K562 (cell line): ENCODE measurements at regions of chr3 and their contacts with region 1.

Region 1: GRCh38 chr3:150408221-150409102 is at the start of gene TSC22D2:
- DNase-seq: peak; percentile 90 to 97 (median 92)
- ATAC-seq: peak; percentile 74
- H3K4me3 ChIP-seq: peak within 1 kb of the TSS; percentile 81
- H3K27ac ChIP-seq: peak within 1 kb of the TSS; percentile 97
- H3K4me1 ChIP-seq: peaks cover 0 to 25% of the 10 kb centered on the region in 2 experiments; a peak in 2 of 5 replicates
- H3K27me3 ChIP-seq: no peaks in the 10 kb centered on the region
- CTCF ChIP-seq: peak in 1 of 3 experiments; percentile 20; a peak in 2 of 6 replicates
- EP300 ChIP-seq: no peak
- POLR2A ChIP-seq: peak; percentile 96
- RAD21 ChIP-seq: peak in 1 of 2 experiments; percentile 35
- polyA plus RNA-seq, gene TSC22D2: 21.7 to 44.0 TPM

Region 2: GRCh38 chr3:149662240-149662887 is 746.1 kb before region 1 on chr3:
- CTCF ChIA-PET with region 1: no interaction called
- POLR2A ChIA-PET with region 1: no interaction called
- in situ Hi-C with region 1: no loop called
- intact Hi-C with region 1: no loop called
- DNase-seq: no peak
- ATAC-seq: no peak
- H3K4me3 ChIP-seq: no peak overlapping the region
- H3K27ac ChIP-seq: no peak overlapping the region
- H3K4me1 ChIP-seq: peaks cover 2 to 5% of the 10 kb centered on the region in 2 experiments; a peak in 3 of 5 replicates
- H3K27me3 ChIP-seq: peaks cover 0 to 12% of the 10 kb centered on the region in 2 experiments; a peak in 2 of 5 replicates
- CTCF ChIP-seq: no peak
- EP300 ChIP-seq: no peak
- POLR2A ChIP-seq: no peak
- RAD21 ChIP-seq: no peak

Region 3: DNA sequence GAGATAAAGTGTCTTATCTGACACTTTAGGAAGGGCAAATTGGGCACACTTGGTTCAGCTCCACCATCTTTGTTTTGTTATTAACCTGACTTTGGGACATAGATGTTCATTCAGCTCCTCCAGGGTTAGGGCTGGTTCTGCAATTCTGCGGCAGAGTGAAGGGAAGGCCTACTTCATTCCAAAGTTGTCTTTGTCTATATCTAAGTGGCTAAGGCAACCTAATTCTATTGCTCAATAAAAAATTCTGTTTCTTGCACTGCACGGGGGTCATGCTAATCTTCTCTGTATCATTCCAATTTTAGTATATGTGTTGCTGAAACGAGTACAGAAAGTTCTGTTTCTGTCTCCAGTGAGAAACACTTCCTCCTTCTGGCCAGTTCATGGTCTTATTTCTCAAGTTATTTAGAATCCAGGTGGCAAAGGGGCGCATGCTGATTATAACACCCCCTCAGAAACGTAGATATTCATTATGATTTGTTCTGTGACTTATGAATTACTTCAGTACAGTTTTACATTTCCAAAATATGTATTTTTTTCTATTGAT is 491.3 kb before region 1 on chr3:
- CTCF ChIA-PET with region 1: no interaction called
- POLR2A ChIA-PET with region 1: no interaction called
- in situ Hi-C with region 1: no loop called
- intact Hi-C with region 1: no loop called
- DNase-seq: no peak
- ATAC-seq: no peak
- H3K4me3 ChIP-seq: no peak overlapping the region
- H3K27ac ChIP-seq: no peak overlapping the region
- H3K4me1 ChIP-seq: no peaks in the 10 kb centered on the region
- H3K27me3 ChIP-seq: no peaks in the 10 kb centered on the region
- CTCF ChIP-seq: no peak
- EP300 ChIP-seq: no peak
- POLR2A ChIP-seq: no peak
- RAD21 ChIP-seq: no peak

Region 4: DNA sequence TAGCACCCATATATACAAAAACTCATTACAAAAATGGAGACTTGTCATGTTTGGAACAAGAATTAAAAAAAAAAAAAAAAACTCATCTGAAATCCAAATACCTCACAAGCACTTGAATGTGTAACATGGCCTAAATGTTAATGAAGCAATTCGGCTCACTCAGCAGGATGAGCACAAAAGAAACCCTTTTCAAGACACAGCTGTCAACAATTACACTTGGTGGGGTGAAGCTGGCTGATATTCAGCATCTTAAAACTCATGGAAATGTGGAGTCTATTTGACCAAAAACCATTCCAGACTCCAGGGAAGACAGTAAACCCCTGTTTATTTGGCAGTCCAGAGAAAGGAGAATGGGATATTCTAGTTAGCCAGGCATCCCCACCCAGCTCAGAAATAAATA is 205.8 kb before region 1 on chr3:
- CTCF ChIA-PET with region 1: no interaction called
- POLR2A ChIA-PET with region 1: no interaction called
- in situ Hi-C with region 1: no loop called
- intact Hi-C with region 1: no loop called
- DNase-seq: no peak
- ATAC-seq: no peak
- H3K4me3 ChIP-seq: no peak overlapping the region
- H3K27ac ChIP-seq: no peak overlapping the region
- H3K4me1 ChIP-seq: no peaks in the 10 kb centered on the region
- H3K27me3 ChIP-seq: peaks cover 2 to 4% of the 10 kb centered on the region in 2 experiments; a peak in 2 of 5 replicates
- CTCF ChIP-seq: no peak
- EP300 ChIP-seq: no peak
- POLR2A ChIP-seq: no peak
- RAD21 ChIP-seq: no peak

Region 5: DNA sequence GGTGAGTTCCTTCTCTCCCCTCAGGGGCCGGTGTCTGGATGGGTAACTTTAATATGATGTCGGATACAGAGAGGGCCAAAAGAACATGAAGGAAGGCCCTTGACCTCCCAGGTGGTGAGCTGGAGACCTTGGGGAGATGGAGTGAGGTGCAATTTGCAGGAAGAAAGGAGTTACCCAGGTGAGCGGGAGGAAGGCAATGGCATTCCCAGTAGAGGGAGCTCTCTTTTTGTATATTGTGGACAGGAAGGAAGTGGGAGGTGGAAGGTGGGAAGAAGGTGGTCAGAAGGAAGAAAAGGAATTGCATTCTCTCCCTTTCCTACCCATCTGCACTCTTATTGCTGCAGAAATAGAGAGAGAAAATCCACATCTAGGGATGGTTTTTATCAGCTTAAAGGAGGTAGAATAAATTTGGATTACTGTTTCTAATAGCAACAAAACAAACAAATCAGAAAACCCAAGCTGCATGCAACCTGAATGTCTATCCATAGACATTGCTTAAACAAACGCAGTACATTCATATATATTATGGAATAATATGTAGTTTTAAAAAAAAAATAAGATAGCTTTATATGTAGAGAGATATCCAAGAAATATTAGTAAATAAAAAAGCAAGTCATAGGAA is 169.4 kb before region 1 on chr3:
- CTCF ChIA-PET with region 1: interaction called, 4 read pairs
- POLR2A ChIA-PET with region 1: interaction called, 4 read pairs
- in situ Hi-C with region 1: no loop called
- intact Hi-C with region 1: loop called (anchors 2 kb)
- DNase-seq: peak in 2 of 4 experiments; percentile 22 to 49
- ATAC-seq: peak; percentile 75
- H3K4me3 ChIP-seq: no peak overlapping the region
- H3K27ac ChIP-seq: no peak overlapping the region
- H3K4me1 ChIP-seq: no peaks in the 10 kb centered on the region
- H3K27me3 ChIP-seq: no peaks in the 10 kb centered on the region
- CTCF ChIP-seq: peak; percentile 28 to 67 (median 62); a peak in 3 of 6 replicates
- EP300 ChIP-seq: no peak
- POLR2A ChIP-seq: no peak
- RAD21 ChIP-seq: peak; percentile 61 to 81

Region 6: GRCh38 chr3:150303776-150304175 is 104.7 kb before region 1 on chr3:
- CTCF ChIA-PET with region 1: no interaction called
- POLR2A ChIA-PET with region 1: interaction called, 3 read pairs
- in situ Hi-C with region 1: no loop called
- intact Hi-C with region 1: loop called (anchors 5 kb)
- DNase-seq: peak; percentile 14 to 52 (median 24)
- ATAC-seq: peak; percentile 93
- H3K4me3 ChIP-seq: no peak overlapping the region
- H3K27ac ChIP-seq: no peak overlapping the region
- H3K4me1 ChIP-seq: peaks cover 0 to 5% of the 10 kb centered on the region in 2 experiments; a peak in 4 of 5 replicates
- H3K27me3 ChIP-seq: no peaks in the 10 kb centered on the region; a peak in 1 of 5 replicates
- CTCF ChIP-seq: peak; percentile 61 to 83 (median 80)
- EP300 ChIP-seq: no peak
- POLR2A ChIP-seq: no peak
- RAD21 ChIP-seq: peak; percentile 25 to 69; a peak in 2 of 4 replicates

Region 7: GRCh38 chr3:150419076-150419868 is 10.8 kb after region 1 on chr3:
- CTCF ChIA-PET with region 1: no interaction called
- POLR2A ChIA-PET with region 1: interaction called, 30 read pairs
- in situ Hi-C with region 1: no loop called
- intact Hi-C with region 1: no loop called
- DNase-seq: no peak
- ATAC-seq: no peak
- H3K4me3 ChIP-seq: no peak overlapping the region
- H3K27ac ChIP-seq: no peak overlapping the region
- H3K4me1 ChIP-seq: peaks cover 2 to 32% of the 10 kb centered on the region in 2 experiments; a peak in 4 of 5 replicates
- H3K27me3 ChIP-seq: no peaks in the 10 kb centered on the region
- CTCF ChIP-seq: no peak
- EP300 ChIP-seq: no peak
- POLR2A ChIP-seq: no peak
- RAD21 ChIP-seq: no peak

Region 8: GRCh38 chr3:150434234-150434633 is 25.8 kb after region 1 on chr3:
- CTCF ChIA-PET with region 1: no interaction called
- POLR2A ChIA-PET with region 1: interaction called, 14 read pairs
- in situ Hi-C with region 1: no loop called
- intact Hi-C with region 1: no loop called
- DNase-seq: no peak
- ATAC-seq: peak; percentile 22
- H3K4me3 ChIP-seq: no peak overlapping the region
- H3K27ac ChIP-seq: peak overlapping the region; percentile 52; the same call in 1 of the 3 replicates
- H3K4me1 ChIP-seq: peaks cover 0 to 33% of the 10 kb centered on the region in 2 experiments; a peak in 3 of 5 replicates
- H3K27me3 ChIP-seq: no peaks in the 10 kb centered on the region
- CTCF ChIP-seq: no peak
- EP300 ChIP-seq: no peak
- POLR2A ChIP-seq: 0 out of 2 replicates have a peak, but pooled peaks have one; percentile 34
- RAD21 ChIP-seq: no peak

Region 9: GRCh38 chr3:150603153-150603979 is 194.9 kb after region 1 on chr3 and contains the start of gene SELENOT:
- CTCF ChIA-PET with region 1: no interaction called
- POLR2A ChIA-PET with region 1: no interaction called
- in situ Hi-C with region 1: no loop called
- intact Hi-C with region 1: loop called (anchors 5 kb)
- DNase-seq: peak; percentile 97 to 98 (median 98)
- ATAC-seq: peak; percentile 82
- H3K4me3 ChIP-seq: peak within 1 kb of the TSS; percentile 94
- H3K27ac ChIP-seq: peak within 1 kb of the TSS; percentile 84
- H3K4me1 ChIP-seq: peaks cover 16 to 40% of the 10 kb centered on the region in 2 experiments
- H3K27me3 ChIP-seq: no peaks in the 10 kb centered on the region
- CTCF ChIP-seq: peak in 2 of 3 experiments; percentile 36 to 48; a peak in 3 of 6 replicates
- EP300 ChIP-seq: no peak; the same call in 1 of the 2 replicates
- POLR2A ChIP-seq: peak; percentile 98
- RAD21 ChIP-seq: peak in 1 of 2 experiments; percentile 32; a peak in 3 of 4 replicates
- polyA plus RNA-seq, gene SELENOT: 261 to 317 TPM